A673 (cell line): ENCODE measurements at regions of chr17 and their contacts with region 1.

Region 1: DNA sequence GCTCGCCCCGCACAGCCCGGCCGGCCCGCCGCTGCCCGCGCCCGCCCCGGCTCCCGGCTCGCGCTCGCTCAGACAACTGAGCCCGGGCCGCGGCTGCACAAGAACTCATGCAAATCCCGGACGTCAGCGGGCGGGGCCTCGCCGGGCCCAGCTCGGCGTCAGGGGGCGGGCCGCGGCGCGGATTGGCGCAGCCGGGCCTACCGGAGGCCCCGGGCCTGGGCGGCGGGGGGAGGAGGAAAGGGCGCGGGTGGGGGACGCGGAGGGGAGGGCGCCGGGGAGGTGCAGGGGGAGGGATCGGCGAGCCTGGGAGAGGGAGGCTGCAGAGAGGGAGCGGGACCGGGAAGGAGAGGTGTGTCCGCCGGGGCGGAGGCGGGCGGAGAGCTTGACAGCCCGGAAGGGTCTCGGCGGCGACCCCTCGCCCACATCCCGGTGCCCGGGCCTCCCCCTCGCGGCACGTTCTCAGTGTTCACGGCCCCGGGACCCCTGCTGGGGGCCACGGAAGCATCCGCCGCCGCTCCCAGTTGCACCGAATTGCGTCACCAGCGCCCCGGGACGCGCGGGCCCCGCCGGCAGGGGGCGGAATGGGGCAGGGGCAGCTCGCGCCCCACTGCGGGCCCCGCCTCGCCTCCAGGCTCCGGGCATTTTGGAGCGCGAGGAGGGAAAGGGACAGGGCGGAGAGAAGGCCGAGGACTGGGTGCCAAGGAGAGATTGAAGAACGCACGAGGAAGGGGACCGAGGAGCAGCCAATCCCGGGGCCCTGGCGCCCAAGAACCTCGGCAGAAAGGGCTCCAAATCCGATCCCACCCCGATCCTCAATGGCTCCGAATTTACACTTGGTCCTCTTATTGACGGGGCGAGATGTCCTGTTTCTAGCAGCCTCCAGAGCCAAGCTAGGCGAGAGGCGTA is at the start of gene CBX4:
- DNase-seq: peak; percentile 97
- H3K4me3 ChIP-seq: peak within 1 kb of the TSS; percentile 59
- H3K27ac ChIP-seq: peak within 1 kb of the TSS; percentile 87
- H3K4me1 ChIP-seq: peaks cover 71% of the 10 kb centered on the region
- H3K27me3 ChIP-seq: peaks cover 42% of the 10 kb centered on the region
- CTCF ChIP-seq: peak; percentile 62
- total RNA-seq, gene CBX4: 42.6 and 45.5 TPM in 2 replicates

Region 2: GRCh38 chr17:79702034-79702433 is 137.6 kb before region 1 on chr17:
- CTCF ChIA-PET with region 1: no interaction called
- POLR2A ChIA-PET with region 1: no interaction called
- intact Hi-C with region 1: no loop called
- DNase-seq: peak; percentile 30
- H3K4me3 ChIP-seq: no peak overlapping the region
- H3K27ac ChIP-seq: no peak overlapping the region
- H3K4me1 ChIP-seq: no peaks in the 10 kb centered on the region
- H3K27me3 ChIP-seq: peaks cover 4% of the 10 kb centered on the region
- CTCF ChIP-seq: 0 out of 2 replicates have a peak, but pooled peaks have one; percentile 19

Region 3: DNA sequence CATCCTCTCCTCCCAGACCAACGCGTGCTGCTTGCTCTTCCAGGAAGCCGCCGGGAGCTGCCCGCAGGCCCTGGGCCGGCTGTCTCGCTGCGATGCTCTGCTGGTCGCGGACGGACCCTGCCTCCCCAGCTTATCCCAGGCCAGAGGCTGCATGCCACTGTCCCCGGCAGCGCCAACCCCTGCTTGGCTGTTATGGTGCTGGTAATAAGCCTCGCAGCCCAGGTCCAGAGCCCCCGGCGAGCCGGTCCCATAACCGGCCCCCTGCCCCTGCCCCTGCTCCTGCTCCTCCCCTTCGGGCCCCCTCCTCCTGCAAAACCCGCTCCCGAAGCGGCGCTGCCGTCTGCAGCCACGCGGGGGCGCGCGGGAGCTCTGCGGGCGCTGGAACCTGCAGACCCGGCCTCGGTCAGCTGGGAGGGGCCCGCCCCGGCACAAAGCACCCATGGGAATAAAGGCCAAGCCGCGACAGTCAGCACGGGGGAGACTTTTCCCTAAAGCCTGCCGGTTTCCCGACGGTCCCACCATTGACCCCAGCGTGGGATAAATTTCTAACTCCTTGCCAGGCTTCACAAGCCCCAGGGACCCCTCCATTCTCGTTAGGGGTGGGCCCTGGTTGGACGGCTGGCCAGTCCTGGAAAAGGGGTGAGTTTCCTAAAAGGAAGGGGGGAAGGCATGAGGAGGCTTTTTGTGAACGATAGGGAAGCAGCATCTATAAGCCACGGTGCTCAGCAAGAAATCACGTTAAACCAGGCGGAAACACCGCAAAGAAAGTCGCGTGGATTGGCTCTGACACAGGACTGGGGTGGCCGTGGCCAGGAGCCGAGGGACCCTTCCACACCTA is 97.6 kb before region 1 on chr17:
- CTCF ChIA-PET with region 1: interaction called, 8 read pairs
- POLR2A ChIA-PET with region 1: no interaction called
- intact Hi-C with region 1: loop called (anchors 10 kb)
- DNase-seq: peak; percentile 83
- H3K4me3 ChIP-seq: peak overlapping the region; percentile 35
- H3K27ac ChIP-seq: no peak overlapping the region
- H3K4me1 ChIP-seq: peaks cover 12% of the 10 kb centered on the region
- H3K27me3 ChIP-seq: peaks cover 4% of the 10 kb centered on the region
- CTCF ChIP-seq: peak; percentile 98

Region 4: DNA sequence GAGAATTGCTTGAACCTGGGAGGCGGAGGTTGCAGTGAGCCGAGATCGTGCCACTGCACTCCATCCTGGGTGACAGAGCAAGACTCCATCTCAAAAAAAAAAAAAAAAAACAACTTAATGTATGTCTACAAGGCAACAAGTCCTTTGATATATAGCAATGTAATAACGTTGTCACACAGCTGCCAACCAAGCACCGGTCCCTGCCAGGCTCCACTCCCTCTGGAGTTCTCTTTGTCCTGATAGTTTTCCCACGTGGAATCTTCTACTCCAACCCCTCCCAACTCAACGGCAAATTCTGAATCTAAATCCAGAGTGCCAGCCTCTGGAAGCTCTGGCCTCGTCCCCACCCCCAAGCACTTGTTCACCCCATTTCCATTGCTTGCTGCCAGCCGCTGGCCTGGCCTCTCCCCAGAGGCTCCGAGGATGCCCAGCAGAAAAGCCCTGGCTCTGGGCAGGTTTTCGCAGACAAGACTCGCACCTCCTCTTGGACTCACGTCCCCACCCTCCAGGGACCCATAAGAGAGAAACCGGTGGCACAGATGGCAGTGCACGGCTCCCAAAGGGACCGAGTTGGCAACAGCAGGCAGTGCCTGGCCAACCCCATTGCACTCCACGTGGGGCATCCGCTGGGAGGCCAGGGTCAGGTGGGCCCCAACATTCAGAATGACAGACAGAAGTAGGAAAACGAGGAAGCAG is 77.6 kb before region 1 on chr17:
- CTCF ChIA-PET with region 1: no interaction called
- POLR2A ChIA-PET with region 1: no interaction called
- intact Hi-C with region 1: no loop called
- DNase-seq: no peak
- H3K4me3 ChIP-seq: no peak overlapping the region
- H3K27ac ChIP-seq: no peak overlapping the region
- H3K4me1 ChIP-seq: no peaks in the 10 kb centered on the region
- H3K27me3 ChIP-seq: no peaks in the 10 kb centered on the region
- CTCF ChIP-seq: no peak

Region 5: GRCh38 chr17:79789534-79790353 is 49.9 kb before region 1 on chr17:
- CTCF ChIA-PET with region 1: interaction called, 3 read pairs
- POLR2A ChIA-PET with region 1: no interaction called
- intact Hi-C with region 1: loop called (anchors 5 kb)
- DNase-seq: peak; percentile 56
- H3K4me3 ChIP-seq: peak overlapping the region; percentile 21
- H3K27ac ChIP-seq: no peak overlapping the region
- H3K4me1 ChIP-seq: peaks cover 50% of the 10 kb centered on the region
- H3K27me3 ChIP-seq: peaks cover 22% of the 10 kb centered on the region
- CTCF ChIP-seq: peak; percentile 68

Region 6: GRCh38 chr17:79796763-79797491 is 42.7 kb before region 1 on chr17 and contains the start of gene CBX8:
- CTCF ChIA-PET with region 1: interaction called, 11 read pairs
- POLR2A ChIA-PET with region 1: interaction called, 3 read pairs
- intact Hi-C with region 1: loop called (anchors 5 kb)
- DNase-seq: peak; percentile 100
- H3K4me3 ChIP-seq: peak within 1 kb of the TSS; percentile 88
- H3K27ac ChIP-seq: peak within 1 kb of the TSS; percentile 94
- H3K4me1 ChIP-seq: peaks cover 61% of the 10 kb centered on the region
- H3K27me3 ChIP-seq: peaks cover under 1% of the 10 kb centered on the region
- CTCF ChIP-seq: no peak
- total RNA-seq, gene CBX8: 24.5 and 27.0 TPM in 2 replicates

Region 7: DNA sequence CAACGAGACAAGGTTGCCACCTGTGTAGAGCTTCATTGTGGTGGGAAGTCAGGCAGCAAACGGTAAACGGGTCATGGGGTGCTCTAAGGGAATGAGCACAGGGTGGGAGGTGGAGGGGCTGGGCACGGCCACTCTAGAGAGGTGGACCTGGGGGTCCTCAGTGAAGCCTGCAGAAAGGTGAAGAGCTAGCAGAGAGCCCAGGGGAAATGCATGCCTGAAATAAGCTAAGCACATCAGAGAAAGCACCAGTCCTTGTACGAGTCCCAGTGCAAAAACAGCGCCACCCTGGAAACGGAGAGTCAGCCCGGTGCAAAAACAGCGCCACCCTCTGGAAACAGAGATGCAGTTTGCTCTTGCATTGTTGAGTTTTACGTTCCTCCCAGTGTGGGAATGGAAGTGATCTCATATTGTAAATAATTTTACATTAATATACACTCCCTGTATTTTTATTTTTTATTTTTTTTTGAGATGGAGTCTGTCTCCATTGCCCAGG is 131.0 kb after region 1 on chr17:
- CTCF ChIA-PET with region 1: interaction called, 3 read pairs
- POLR2A ChIA-PET with region 1: interaction called, 3 read pairs
- intact Hi-C with region 1: loop called (anchors 5 kb)
- DNase-seq: peak; percentile 79
- H3K4me3 ChIP-seq: no peak overlapping the region
- H3K27ac ChIP-seq: no peak overlapping the region
- H3K4me1 ChIP-seq: peaks cover 13% of the 10 kb centered on the region
- H3K27me3 ChIP-seq: no peaks in the 10 kb centered on the region
- CTCF ChIP-seq: peak; percentile 76